ENCODE measurements at regions of chr17 and their contacts with region 1.

Region 1: GRCh38 chr17:50269477-50270434 is 4.5 kb upstream of the TMEM92 start:
- DNase-seq: no peak
- H3K4me3 ChIP-seq: peak overlapping the region; percentile 41
- H3K27me3 ChIP-seq: no peaks in the 10 kb centered on the region
- CTCF ChIP-seq: peak; percentile 91

Region 2: GRCh38 chr17:50111734-50112655 is 157.8 kb before region 1 on chr17:
- CTCF ChIA-PET with region 1: no interaction called
- POLR2A ChIA-PET with region 1: no interaction called
- DNase-seq: no peak
- H3K4me3 ChIP-seq: no peak overlapping the region
- H3K27me3 ChIP-seq: no peaks in the 10 kb centered on the region
- CTCF ChIP-seq: no peak

Region 3: GRCh38 chr17:50161023-50161910 is 108.5 kb before region 1 on chr17:
- CTCF ChIA-PET with region 1: interaction called, 21 read pairs
- POLR2A ChIA-PET with region 1: no interaction called
- DNase-seq: no peak
- H3K4me3 ChIP-seq: peak overlapping the region; percentile 60
- H3K27me3 ChIP-seq: no peaks in the 10 kb centered on the region
- CTCF ChIP-seq: peak; percentile 87

Region 4: DNA sequence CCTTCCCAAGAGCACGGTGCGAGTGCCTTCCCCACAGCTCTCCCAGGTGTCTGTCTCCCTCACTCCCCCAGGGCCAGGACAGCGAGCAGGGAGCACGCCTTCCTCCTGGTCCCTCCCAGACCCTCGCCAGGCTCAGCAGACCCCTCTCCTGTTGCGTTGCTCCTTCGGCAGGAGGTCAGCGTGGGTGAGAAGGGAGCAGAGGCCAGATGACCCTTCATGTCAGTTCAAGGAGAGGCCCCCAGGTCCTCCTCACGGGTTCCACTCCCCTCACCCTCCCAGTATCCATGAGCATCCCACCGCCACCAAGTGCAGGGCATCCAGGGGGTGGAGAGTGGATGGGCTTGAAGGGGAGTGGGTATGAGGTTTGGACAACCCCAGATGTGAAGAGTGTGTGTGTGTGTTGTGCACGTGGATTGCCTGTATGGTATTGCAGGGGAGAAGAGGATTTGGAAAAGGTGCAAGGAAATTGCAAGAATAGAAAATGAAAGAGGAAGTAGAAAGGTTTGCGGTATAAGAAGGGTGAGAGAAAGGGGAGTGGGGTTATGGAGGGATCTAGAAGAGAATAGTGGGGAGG is 86.2 kb before region 1 on chr17:
- CTCF ChIA-PET with region 1: interaction called, 112 read pairs
- POLR2A ChIA-PET with region 1: interaction called, 13 read pairs
- DNase-seq: no peak
- H3K4me3 ChIP-seq: no peak overlapping the region
- H3K27me3 ChIP-seq: no peaks in the 10 kb centered on the region
- CTCF ChIP-seq: no peak

Region 5: DNA sequence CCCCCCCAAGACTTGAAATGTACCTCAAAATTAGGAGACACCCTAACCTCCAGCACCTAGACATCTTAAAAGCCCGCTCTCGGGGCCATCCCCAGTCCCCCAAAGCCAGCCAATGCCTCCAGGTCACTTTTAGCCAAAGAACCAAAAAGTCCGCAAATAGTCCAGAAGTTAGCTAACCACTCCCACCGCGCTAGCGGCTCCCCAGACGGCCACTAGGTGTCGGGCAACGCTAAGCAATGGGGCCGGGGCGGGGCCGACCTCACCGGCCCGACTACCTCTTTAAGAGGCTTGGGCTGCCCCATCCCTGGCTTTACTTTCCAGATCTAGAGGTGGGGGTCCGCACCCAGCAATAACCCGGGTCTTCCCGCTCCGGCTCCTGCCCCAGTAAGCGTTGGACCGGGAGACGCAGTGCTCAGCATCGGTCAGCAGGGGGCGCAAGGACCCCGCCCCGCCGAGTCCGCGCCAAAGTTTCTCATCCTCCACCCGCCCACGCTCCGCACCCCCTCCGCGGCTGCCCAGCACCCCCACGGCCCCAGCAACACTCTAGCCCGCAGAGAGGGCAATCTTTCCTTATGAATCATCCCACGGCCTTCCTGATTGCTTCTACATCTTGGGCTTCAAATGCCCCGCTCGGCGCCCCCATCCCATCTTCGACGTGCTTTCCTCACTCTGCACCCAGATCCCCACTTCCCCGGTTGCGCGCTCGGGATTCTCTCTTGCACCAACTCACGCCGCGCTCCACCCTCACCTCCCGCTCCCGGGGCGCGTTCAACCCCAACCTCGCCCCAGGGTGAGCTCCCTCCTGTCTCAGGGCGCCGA is 69.1 kb before region 1 on chr17:
- CTCF ChIA-PET with region 1: interaction called, 515 read pairs
- POLR2A ChIA-PET with region 1: interaction called, 286 read pairs
- DNase-seq: no peak
- H3K4me3 ChIP-seq: peak overlapping the region; percentile 97
- H3K27me3 ChIP-seq: no peaks in the 10 kb centered on the region
- CTCF ChIP-seq: peak; percentile 90

Region 6: DNA sequence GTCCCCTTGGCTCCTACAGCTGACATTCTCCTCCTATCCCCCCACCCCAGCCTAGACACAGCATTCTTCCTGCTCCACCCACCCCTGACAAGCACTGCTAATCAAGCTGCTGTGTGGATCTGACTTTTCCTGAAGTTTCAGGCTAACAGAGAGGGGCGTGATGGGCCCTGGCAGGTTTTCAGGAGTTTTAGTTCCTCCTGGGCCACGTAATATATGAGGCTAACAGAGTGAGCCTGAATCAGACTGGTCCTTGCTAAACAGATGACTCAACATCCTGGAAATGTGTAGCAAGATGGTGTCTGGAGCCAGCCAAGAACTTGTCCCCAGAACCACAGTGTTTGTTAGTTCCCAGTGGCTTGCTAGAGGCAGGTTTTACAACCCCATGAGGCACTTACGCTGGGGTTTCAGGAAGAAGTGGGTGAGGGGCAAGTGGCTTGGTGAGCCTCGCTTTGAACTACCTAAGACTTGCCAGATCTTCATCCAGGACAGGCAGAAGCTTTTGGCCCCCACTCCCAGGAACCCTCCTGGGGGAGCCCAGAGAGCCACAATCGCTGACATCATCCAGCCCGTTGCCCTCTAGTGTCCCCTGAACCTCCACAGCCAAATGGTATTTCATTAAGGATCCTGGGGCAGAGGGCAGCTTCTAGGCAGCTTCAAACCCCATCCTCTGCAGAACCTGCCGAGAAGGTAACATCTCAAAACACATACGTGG is 20.4 kb after region 1 on chr17:
- CTCF ChIA-PET with region 1: interaction called, 20 read pairs
- POLR2A ChIA-PET with region 1: interaction called, 4 read pairs
- DNase-seq: peak; percentile 98
- H3K4me3 ChIP-seq: peak overlapping the region; percentile 18
- H3K27me3 ChIP-seq: no peaks in the 10 kb centered on the region
- CTCF ChIP-seq: no peak

Region 7: DNA sequence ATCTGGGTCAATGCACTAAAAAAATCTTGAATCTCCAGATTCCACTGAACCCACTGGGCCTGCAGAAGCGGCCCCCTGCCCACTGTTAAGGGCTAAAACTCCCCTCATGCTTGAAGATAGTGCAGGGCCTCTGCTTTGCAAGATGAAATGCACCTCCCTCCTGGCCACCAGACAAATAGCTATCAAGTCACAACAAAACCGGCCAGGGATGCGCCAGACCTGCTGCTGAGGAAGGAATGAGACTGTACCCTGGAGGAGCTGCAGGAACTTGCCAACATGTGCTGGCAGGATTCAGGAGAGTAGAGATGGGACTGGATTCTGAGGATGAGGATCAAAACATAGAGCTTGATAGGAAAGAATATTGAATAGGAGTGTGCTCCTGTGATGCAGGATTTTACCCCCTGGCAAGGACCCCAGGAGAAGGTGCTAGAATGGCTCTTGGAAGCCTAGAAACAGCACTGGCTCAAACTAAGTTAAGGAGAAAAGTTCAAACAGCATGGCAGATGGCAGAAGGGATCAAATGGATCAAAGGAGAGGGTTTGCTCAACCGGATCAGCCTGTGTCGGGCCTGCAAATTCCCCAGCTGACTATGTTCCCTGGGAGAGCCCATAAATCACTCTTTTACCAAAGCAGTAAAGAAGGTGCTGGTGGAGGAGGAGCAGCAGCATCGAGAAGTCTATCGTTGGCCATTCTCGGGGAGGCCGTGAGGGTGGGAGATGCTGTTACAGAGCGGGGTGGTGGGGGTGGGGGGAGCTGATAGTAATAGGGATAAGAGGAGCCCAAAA is 48.9 kb after region 1 on chr17:
- CTCF ChIA-PET with region 1: no interaction called
- POLR2A ChIA-PET with region 1: no interaction called
- DNase-seq: no peak
- H3K4me3 ChIP-seq: no peak overlapping the region
- H3K27me3 ChIP-seq: peaks cover 9% of the 10 kb centered on the region
- CTCF ChIP-seq: no peak

Region 8: GRCh38 chr17:50372758-50373556 is 103.2 kb after region 1 on chr17 and contains the starts of genes EME1 and MRPL27:
- CTCF ChIA-PET with region 1: no interaction called
- POLR2A ChIA-PET with region 1: no interaction called
- DNase-seq: peak; percentile 43
- H3K4me3 ChIP-seq: peak within 1 kb of the TSS; percentile 54
- H3K27me3 ChIP-seq: no peaks in the 10 kb centered on the region
- CTCF ChIP-seq: no peak
- polyA plus RNA-seq, gene EME1: 5.3 and 5.9 TPM in 2 replicates
- polyA plus RNA-seq, gene MRPL27: 115 and 142 TPM in 2 replicates

Region 9: DNA sequence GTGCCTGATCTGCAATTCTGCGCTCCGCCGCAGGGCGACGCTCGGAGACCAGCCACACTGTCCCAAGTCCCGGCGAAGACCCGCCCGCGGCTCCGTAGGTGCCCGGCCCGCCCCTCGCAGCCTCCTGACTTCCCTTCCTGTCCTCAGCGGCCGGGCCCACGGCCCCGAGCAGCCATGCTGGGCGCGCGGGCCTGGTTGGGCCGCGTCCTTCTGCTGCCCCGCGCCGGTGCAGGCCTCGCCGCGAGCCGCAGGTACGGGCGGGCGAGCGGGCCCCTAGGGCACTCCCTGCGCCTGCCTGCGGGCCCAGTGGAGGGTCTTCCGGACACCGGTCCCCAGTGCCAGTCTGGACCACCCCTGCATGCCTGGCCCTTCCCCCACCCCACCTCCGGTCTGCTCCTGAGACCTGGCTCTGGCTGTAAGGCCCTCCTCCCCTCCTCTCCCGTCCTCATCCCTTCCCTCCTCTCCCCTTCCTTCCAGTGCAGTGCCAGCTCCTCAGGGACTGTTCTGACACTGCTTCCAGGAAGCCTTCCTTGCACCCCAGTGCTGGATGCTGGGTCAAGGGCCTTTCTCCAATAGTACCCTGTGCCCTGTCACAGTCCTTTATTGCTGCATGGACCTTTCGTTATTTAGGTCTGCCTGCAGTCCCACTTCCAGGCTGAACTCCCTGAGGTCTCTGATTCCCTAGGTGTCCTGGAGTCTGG is 277.4 kb after region 1 on chr17 and contains the start of gene SPATA20:
- CTCF ChIA-PET with region 1: no interaction called
- POLR2A ChIA-PET with region 1: no interaction called
- DNase-seq: peak; percentile 29
- H3K4me3 ChIP-seq: peak within 1 kb of the TSS; percentile 52
- H3K27me3 ChIP-seq: no peaks in the 10 kb centered on the region
- CTCF ChIP-seq: peak; percentile 96
- polyA plus RNA-seq, gene SPATA20: 27.7 and 46.4 TPM in 2 replicates